Aorta (tissue), 5 donors: ENCODE measurements at regions of chr1 and their contacts with region 1.

Region 1: GRCh38 chr1:204162231-204163074 is 3.7 kb downstream of the REN start:
- DNase-seq: peak; percentile 77 to 92
- ATAC-seq: peak; percentile 90
- H3K4me3 ChIP-seq: no peak overlapping the region
- H3K27ac ChIP-seq: no peak overlapping the region
- H3K4me1 ChIP-seq: no peaks in the 10 kb centered on the region
- H3K27me3 ChIP-seq: no peaks in the 10 kb centered on the region

Region 2: GRCh38 chr1:204207136-204207616 is 44.7 kb after region 1 on chr1:
- intact Hi-C with region 1: loop called in 1 of 2 experiments (anchors 2 kb)
- DNase-seq: peak; percentile 68 to 90
- ATAC-seq: peak; percentile 87
- H3K4me3 ChIP-seq: no peak overlapping the region
- H3K27ac ChIP-seq: no peak overlapping the region
- H3K4me1 ChIP-seq: no peaks in the 10 kb centered on the region
- H3K27me3 ChIP-seq: no peaks in the 10 kb centered on the region

Region 3: DNA sequence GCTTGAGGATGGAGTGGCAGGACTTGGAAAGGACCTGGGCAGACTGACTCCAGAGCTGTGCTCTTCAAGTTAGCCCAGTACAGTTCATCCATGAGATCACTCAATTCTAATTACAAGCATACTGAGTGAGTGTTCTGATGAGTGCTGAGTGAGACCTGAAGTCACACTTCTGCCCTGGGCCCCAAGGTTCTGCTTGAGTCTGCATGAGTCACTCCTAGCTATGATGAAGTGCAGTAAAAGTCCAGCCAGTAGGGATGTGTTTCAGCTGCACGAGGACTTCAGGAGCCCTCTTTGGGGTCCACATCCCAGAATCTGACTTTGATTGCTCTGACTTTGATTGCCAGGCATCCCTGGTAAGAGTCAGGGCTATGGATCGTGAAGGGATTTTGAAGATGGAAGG is 161.4 kb after region 1 on chr1:
- intact Hi-C with region 1: no loop called
- DNase-seq: no peak
- ATAC-seq: no peak
- H3K4me3 ChIP-seq: no peak overlapping the region
- H3K27ac ChIP-seq: no peak overlapping the region
- H3K4me1 ChIP-seq: no peaks in the 10 kb centered on the region
- H3K27me3 ChIP-seq: no peaks in the 10 kb centered on the region

Region 4: GRCh38 chr1:204363335-204364124 is 201.1 kb after region 1 on chr1:
- intact Hi-C with region 1: loop called (anchors 2 kb)
- DNase-seq: peak; percentile 77 to 86
- ATAC-seq: peak; percentile 85
- H3K4me3 ChIP-seq: peak overlapping the region; percentile 36 to 49
- H3K27ac ChIP-seq: no peak overlapping the region
- H3K4me1 ChIP-seq: no peaks in the 10 kb centered on the region
- H3K27me3 ChIP-seq: no peaks in the 10 kb centered on the region

Region 5: DNA sequence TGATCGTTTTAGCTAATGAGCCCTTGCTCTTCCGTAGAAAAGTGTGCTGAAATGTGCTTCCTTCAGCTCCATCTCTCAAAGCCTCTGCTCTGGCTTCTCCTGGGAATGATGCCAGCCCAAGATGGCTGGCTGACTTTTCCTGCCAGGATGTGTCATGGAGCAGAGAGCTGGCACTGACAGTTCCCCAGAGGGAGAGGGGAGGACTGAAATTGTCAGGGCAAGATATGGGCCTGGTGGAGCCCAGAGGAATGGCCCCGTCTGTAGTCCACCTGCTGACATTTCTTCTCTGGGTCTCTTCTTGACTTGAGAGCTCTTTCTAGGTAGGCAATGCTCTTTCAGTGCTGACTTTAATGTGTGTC is 222.5 kb after region 1 on chr1:
- intact Hi-C with region 1: loop called in 1 of 2 experiments (anchors 5 kb)
- DNase-seq: peak; percentile 76 to 83
- ATAC-seq: no peak
- H3K4me3 ChIP-seq: no peak overlapping the region
- H3K27ac ChIP-seq: no peak overlapping the region
- H3K4me1 ChIP-seq: no peaks in the 10 kb centered on the region
- H3K27me3 ChIP-seq: no peaks in the 10 kb centered on the region